ENCODE measurements at regions of chr14 and their contacts with region 1.

Region 1: GRCh38 chr14:47278234-47278842 is 397.1 kb downstream of the MDGA2 start:
- DNase-seq: peak; percentile 69
- ATAC-seq: peak; percentile 53
- H3K4me3 Mint-ChIP-seq: no peak overlapping the region
- H3K27ac Mint-ChIP-seq: no peak overlapping the region
- H3K4me1 Mint-ChIP-seq: peaks cover 2% of the 10 kb centered on the region
- H3K27me3 Mint-ChIP-seq: no peaks in the 10 kb centered on the region

Region 2: DNA sequence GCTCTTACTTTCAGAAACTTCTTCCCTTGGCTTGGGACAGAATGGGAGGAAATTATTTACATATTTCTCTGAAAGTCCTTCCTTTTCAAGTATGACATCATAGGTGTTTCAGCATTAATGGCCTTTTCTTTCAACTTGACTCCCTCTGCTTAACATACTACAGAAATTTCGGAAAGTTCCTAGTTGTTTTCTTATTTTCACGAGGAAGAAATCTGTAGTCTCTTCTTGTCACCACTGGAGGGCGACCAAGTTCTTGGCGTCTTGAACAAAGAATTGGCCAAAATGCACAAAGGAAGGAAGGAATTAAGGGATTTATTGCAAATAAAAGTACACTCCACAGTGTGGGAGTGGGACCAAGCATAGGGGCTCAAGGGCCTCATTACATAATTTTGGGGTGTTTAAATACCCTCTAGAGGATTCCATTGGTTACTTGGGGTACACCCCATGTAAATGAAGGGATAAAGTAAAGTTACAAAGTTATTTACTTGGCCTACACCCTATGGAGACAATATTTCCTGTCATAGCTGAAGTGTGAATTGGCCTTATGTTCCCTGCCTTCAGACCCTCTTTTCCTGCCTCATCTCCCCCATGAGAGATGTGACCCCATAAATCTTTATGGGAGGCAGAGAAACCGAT is 697.2 kb before region 1 on chr14:
- CTCF ChIA-PET with region 1: no interaction called
- POLR2A ChIA-PET with region 1: no interaction called
- intact Hi-C with region 1: loop called in 1 of 2 experiments (anchors 2 kb)
- DNase-seq: peak; percentile 32
- ATAC-seq: no peak
- H3K4me3 Mint-ChIP-seq: no peak overlapping the region
- H3K27ac Mint-ChIP-seq: no peak overlapping the region
- H3K4me1 Mint-ChIP-seq: no peaks in the 10 kb centered on the region
- H3K27me3 Mint-ChIP-seq: no peaks in the 10 kb centered on the region